ENCODE measurements at regions of chr1 and their contacts with region 1.

Region 1: DNA sequence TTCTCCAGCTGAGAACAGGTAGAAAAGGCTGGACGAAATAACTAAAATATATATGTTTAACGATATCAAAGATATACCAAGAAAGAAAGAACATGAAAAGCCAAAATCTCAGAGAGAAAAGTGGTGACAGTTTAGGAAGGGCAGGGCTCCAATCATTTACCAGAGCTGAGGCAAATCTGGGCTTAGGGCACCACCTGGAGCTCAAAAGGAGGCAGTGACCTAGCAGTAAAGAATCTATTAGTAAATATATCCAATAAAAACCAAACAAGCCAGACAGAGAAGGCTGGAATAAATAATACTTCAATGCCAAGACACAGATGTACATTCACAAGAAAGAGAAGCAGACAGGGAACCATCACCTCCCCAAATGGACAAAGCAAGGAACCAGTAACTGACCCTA is 43.5 kb downstream of the CHIA start:
- DNase-seq: peak in 2 of 10 donors; percentile 23 to 26

Region 2: GRCh38 chr1:111227851-111228747 is 106.1 kb before region 1 on chr1:
- intact Hi-C with region 1: loop called (anchors 5 kb)
- DNase-seq: peak in 2 of 10 donors; percentile 19 to 29

Region 3: DNA sequence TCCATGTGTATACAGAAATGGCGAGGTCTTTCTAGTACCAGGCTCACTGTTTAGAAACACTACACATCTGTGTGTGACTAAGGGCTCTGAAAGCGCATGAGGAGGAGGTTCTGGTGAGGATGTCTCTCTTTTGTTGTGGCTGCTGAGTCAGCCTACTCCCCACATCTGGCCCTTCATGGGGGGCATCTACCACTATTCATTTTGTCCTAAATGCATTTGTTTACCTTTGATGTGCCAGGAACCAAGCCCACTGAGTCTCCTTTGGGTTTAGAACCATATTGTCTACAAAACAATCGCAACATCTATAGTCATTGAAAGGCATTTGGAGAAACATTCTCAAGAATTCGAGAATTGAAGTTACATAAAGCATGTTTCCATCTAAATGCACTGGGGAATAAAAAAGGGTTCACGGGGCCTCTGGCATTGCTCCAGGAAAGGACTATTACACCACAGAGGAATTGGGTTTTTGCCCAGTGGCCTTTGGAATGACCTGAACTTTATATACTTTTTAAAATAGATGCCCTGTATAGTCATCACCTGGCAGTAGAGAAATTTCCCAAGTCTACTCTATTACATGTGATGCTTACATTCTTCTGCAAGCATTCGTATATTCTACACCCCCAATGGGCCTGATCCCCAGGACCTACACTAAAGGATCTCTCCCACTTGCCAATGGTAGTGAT is 204.3 kb after region 1 on chr1:
- intact Hi-C with region 1: no loop called
- DNase-seq: no peak